PC-9 (cell line): ENCODE measurements at regions of chr11 and their contacts with region 1.

Region 1: DNA sequence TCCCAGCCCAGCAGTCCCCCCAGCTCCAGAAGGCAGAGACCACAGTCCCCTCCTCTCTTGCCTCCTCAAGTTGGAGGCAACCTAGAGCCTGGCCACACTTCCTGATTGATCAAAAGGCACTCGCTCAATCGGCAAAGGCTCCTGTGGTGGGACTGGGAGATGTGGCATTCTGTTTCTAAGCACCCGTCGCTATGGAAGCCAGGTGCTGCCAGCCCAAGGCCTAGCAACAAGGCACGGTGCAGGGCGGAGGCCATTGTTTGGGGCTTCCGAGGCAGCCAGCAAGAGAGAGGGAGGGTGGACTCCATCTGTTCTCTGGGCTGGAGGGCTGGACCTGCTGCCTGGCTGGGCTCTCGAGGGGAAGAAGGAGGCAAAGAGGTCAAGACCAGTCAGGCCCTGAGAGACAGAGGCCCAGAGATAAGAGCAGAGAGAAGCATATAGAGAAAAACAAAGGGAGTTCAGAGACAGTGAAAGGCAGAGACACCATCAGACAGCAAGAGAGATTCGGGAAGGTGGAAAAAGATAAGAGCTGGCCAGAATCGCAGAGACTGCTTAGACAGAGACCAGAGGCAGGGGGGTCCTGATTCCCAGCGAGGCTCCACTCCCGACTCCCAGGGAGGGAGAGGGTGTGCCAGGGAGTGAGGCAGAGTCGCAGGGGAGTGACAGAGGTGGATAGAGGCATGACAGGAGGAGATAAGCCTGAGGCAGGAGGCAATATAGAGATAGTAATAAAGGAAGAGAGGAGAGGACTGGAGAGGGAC is 21.2 kb downstream of the PDE2A start:
- DNase-seq: no peak
- H3K4me3 ChIP-seq: no peak overlapping the region
- H3K27ac ChIP-seq: no peak overlapping the region
- H3K4me1 ChIP-seq: no peaks in the 10 kb centered on the region
- H3K27me3 ChIP-seq: peaks cover 6% of the 10 kb centered on the region; the same call in 1 of the 2 replicates
- CTCF ChIP-seq: no peak

Region 2: DNA sequence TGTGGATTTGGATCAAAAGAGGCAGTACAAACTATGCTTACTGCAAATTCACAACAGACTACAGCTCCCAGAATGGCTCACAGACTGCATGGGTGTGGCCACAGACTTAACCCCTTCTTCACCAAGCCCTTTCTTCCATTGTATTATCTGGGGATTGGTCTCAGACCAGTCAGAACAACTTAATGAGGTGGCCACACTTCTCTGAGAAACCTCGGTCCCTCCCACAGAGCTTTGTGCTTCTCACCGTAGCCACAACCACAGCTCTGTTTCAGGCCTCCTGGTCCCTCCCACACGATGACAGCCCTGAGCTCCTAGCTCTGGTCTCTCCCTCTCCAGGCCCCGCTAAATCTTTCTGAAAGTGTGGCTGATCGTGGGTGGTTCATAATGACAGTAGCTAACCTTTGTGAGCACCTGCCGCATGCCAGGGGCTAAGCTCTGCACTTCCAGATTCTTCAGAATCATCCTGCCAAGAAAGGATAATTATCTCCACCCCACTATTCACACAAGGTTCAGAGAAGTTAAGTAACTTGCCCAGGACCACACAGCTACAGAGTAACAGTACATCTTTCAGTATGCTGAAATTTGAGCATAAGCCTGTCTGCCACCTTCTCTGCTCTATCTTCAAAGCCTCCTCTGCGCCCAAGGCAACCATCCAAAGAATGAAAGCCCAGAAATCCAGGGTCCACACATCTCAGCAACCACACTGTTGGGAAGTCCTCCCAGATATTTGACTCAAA is 15.7 kb after region 1 on chr11:
- CTCF ChIA-PET with region 1: interaction called, 11 read pairs
- POLR2A ChIA-PET with region 1: no interaction called
- intact Hi-C with region 1: no loop called
- DNase-seq: no peak
- H3K4me3 ChIP-seq: no peak overlapping the region
- H3K27ac ChIP-seq: no peak overlapping the region
- H3K4me1 ChIP-seq: no peaks in the 10 kb centered on the region
- H3K27me3 ChIP-seq: peaks cover 69% of the 10 kb centered on the region
- CTCF ChIP-seq: no peak